Colonic mucosa (tissue), 4 donors: ENCODE measurements at regions of chr10 and their contacts with region 1.

Region 1: GRCh38 chr10:3239066-3239919 is 66.7 kb upstream of the PITRM1 start:
- DNase-seq: peak; percentile 74
- H3K4me3 ChIP-seq: no peak overlapping the region
- H3K27ac ChIP-seq: no peak overlapping the region
- H3K4me1 ChIP-seq: peaks cover 3% of the 10 kb centered on the region
- H3K27me3 ChIP-seq: no peaks in the 10 kb centered on the region
- CTCF ChIP-seq: peak; percentile 93

Region 2: DNA sequence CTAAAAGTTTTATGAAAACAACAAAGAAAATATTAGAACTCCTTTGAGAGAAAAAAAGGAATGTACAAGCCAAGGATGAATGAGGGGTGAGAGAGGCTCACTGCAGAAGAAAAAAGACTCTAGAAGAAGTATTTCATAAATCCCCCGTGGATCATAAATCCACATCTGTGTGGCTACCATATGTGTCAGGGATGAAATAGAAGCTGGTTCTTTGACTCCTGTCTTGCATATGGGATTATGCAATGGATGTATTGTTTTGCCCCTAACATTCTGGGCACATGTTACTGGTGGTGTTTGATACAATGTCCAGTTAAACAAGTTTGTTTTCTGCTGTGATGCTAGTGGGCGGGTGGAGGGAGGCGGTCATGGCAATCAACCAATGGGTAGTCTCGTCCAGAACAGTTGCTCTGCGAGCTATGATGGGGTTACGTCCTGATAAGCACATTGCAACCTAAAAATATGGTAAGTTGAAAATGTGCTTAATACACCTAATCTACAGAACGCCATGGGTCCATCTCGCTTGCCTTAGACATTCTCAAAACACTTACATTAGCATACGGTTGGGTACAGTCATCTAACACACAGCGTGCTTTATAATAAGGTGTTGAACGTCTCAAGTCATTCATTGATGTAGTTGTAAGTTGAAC is 32.7 kb before region 1 on chr10:
- intact Hi-C with region 1: no loop called
- DNase-seq: no peak
- H3K4me3 ChIP-seq: no peak overlapping the region
- H3K27ac ChIP-seq: no peak overlapping the region
- H3K4me1 ChIP-seq: no peaks in the 10 kb centered on the region
- H3K27me3 ChIP-seq: no peaks in the 10 kb centered on the region
- CTCF ChIP-seq: no peak

Region 3: GRCh38 chr10:3776796-3777571 is 537.7 kb after region 1 on chr10:
- intact Hi-C with region 1: loop called (anchors 5 kb)
- DNase-seq: peak; percentile 78
- H3K4me3 ChIP-seq: no peak overlapping the region
- H3K27ac ChIP-seq: peak overlapping the region; percentile 100
- H3K4me1 ChIP-seq: peaks cover 14% of the 10 kb centered on the region
- H3K27me3 ChIP-seq: no peaks in the 10 kb centered on the region
- CTCF ChIP-seq: no peak

Region 4: GRCh38 chr10:4501306-4501705 is 1262.0 kb after region 1 on chr10:
- intact Hi-C with region 1: loop called (anchors 10 kb)
- DNase-seq: no peak
- H3K4me3 ChIP-seq: no peak overlapping the region
- H3K27ac ChIP-seq: no peak overlapping the region
- H3K4me1 ChIP-seq: no peaks in the 10 kb centered on the region
- H3K27me3 ChIP-seq: no peaks in the 10 kb centered on the region
- CTCF ChIP-seq: no peak

Region 5: GRCh38 chr10:4656576-4657182 is 1417.4 kb after region 1 on chr10:
- intact Hi-C with region 1: loop called (anchors 10 kb)
- DNase-seq: peak; percentile 68
- H3K4me3 ChIP-seq: no peak overlapping the region
- H3K27ac ChIP-seq: no peak overlapping the region
- H3K4me1 ChIP-seq: no peaks in the 10 kb centered on the region
- H3K27me3 ChIP-seq: no peaks in the 10 kb centered on the region
- CTCF ChIP-seq: peak; percentile 82